Posterior cingulate gyrus (tissue), 11 donors: ENCODE measurements at regions of chr21 and their contacts with region 1.

Region 1: DNA sequence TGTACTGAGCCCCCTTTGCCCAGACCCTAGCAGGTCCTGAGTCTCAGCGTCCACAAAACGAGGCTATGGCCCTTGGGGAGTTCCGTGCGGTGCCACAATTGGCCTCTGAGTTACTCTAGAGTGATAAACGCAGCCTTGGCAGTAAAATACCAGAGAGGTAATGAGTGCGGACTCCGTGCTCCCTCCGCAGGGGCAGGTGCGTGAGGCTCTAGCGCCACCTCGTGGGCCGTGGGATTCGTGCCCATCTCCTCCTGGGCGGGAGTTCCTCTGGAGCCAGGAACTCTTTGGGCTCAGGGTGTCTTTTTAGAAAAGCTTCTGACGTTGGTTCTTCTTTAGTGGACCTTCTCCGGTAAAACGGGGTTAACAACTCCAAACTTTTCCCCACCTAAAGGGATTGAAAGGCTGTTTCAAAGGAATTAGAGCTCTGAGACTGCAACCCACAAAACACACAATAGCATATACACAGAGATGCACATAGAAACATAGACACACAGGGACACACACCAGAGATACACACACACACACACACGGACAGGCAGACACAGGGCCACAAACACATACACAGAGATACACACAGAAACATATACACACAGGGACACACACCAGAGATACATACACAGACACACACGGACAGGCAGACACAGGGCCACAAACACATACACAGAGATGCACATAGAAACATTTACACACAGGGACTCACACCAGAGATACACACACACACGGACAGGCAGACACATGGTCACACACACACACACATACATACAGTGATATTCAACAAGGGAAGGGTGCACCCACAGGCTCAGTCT is 99.4 kb downstream of the KCNJ15 start:
- DNase-seq: peak; percentile 67 to 97 (median 84)

Region 2: DNA sequence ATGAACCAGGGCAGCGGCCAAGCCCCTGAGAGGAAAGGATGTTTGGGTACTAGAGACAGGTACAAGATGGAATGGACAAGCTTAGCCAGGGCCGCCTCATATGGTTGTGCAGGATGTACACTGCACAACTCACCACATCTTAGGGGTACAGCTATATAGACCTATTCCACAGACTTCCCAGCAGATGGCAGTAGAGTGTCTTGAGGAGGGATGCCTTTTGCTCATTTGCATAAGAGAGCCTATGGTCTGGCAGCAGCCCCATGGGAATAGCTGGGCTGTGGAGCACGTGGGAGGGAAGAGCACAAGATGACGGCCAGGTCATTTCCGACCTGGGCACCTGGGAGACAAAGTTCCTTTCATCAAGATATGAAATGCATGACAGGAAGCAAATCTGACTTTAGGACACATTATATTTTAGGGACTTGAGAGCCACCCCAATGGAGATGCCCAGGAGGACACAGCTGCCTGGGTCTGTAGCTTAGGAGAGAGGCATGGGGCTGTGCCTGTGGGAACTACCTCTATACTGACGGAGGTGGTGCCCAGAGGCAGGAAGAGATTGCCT is 655.5 kb before region 1 on chr21:
- intact Hi-C with region 1: loop called (anchors 10 kb)
- DNase-seq: peak in 4 of 10 donors; percentile 18 to 87 (median 38)

Region 3: GRCh38 chr21:38159355-38159754 is 196.8 kb before region 1 on chr21:
- intact Hi-C with region 1: loop called (anchors 2 kb)
- DNase-seq: peak in 7 of 10 donors; percentile 19 to 84 (median 40)

Region 4: DNA sequence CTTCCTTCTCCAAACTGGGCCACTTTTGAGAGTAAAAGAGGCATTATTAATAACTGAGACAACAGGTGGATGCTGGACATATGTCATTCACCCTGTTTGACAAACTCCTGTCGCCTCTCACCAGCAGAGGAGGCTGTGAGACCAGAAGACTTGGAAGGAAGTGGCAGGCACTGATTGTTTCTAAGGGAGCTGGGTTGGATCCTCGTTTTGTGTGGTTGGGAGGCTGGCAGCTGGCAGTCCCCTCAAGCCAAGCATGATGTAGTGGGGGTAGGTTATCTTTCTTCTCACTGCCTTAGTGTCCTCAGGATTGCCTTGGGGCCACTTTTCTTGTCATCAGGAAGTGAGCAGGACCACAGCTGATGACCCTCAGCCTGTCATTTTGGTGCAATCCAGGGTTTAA is 185.9 kb before region 1 on chr21:
- intact Hi-C with region 1: loop called (anchors 5 kb)
- DNase-seq: peak in 1 of 10 donors; percentile 15

Region 5: DNA sequence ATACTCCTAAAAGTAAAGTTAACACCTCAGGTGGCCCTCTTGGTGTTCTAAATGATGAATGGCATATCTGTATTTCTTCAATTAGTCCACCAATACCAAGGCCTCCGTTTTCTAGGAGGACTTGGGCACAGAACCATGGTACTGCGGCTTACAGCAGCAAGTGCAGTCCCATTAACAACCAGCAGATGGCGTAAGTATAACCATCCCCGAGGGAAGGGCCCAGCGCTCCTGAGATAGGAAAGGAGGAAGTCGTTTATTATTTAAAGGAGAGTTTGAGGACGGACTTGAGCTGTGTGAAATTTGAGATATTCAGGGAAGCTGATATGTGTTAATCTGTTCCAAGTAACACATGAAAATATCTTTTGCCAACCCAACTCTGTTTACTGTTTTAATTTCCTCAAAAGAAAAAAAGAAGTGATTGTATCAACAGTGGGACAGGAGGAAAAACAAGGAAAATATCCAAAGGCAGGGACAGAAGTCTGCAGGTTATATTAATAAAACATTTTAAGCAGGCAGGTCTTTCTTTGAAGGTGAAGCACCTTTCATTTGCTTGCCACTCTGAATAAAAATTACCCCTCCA is 137.1 kb before region 1 on chr21:
- intact Hi-C with region 1: loop called (anchors 2 kb)
- DNase-seq: peak in 4 of 10 donors; percentile 27 to 43 (median 36)

Region 6: GRCh38 chr21:38544661-38545060 is 188.5 kb after region 1 on chr21:
- intact Hi-C with region 1: no loop called
- DNase-seq: no peak